Activated B cell treated with CpG ODN at 0.5 μM for 24 hours (primary cell): ENCODE measurements at regions of chr7 and their contacts with region 1.

Region 1: DNA sequence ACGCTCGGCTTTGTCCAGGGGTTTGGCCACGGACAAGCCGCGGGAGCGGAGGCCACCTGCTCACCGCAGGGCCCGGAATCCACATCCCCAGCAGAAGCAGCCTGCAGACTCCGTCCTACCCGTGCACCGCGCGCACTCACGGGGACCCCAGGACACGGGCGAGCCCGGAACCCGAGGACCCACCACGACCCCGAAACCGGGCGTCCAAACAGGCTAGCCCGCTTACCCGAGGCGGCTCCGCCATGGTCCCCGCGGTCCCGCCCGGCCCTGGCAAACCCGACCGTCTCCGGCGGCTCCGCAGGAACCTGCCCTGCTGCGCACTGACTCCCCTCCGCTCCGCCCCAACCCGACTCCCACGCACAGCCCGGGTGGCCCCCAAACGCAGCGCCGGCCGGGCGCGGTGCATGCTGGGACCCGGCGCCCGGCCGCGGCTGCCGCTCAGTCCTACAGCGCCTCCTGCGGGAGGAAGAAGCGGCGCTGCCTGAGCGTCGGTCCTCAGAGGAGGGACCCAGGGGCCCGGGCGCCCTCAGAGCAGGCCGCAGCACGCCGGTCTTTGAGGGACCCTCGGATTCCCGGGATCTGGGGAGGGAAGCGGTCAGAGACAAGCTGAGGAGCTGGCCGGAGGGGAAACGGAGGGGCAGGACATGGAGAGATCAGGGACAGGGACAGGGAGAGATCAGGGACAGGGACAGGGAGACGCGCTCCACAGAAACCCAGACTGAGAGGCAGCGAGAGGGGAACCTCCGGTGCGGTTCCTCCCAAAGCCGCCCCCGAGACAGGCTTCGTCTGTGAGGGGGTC is at the start of gene ZNF786:
- DNase-seq: peak; percentile 90
- ATAC-seq: peak; percentile 84
- H3K4me3 Mint-ChIP-seq: peak within 1 kb of the TSS; percentile 100
- H3K27ac Mint-ChIP-seq: peak within 1 kb of the TSS; percentile 100
- H3K4me1 Mint-ChIP-seq: peaks cover 32% of the 10 kb centered on the region
- H3K27me3 Mint-ChIP-seq: no peaks in the 10 kb centered on the region
- CTCF ChIP-seq: no peak
- total RNA-seq, gene ZNF786: 9.2 and 11.0 TPM in 2 replicates

Region 2: GRCh38 chr7:148856891-148857290 is 233.7 kb before region 1 on chr7:
- CTCF ChIA-PET with region 1: no interaction called
- POLR2A ChIA-PET with region 1: no interaction called
- intact Hi-C with region 1: loop called (anchors 5 kb)
- DNase-seq: no peak
- ATAC-seq: no peak
- H3K4me3 Mint-ChIP-seq: no peak overlapping the region
- H3K27ac Mint-ChIP-seq: no peak overlapping the region
- H3K4me1 Mint-ChIP-seq: peaks cover 11% of the 10 kb centered on the region
- H3K27me3 Mint-ChIP-seq: no peaks in the 10 kb centered on the region
- CTCF ChIP-seq: no peak

Region 3: GRCh38 chr7:148962823-148963582 is 127.6 kb before region 1 on chr7:
- CTCF ChIA-PET with region 1: no interaction called
- POLR2A ChIA-PET with region 1: no interaction called
- intact Hi-C with region 1: loop called (anchors 1 kb)
- DNase-seq: no peak
- ATAC-seq: peak; percentile 53
- H3K4me3 Mint-ChIP-seq: peak overlapping the region; percentile 93
- H3K27ac Mint-ChIP-seq: peak overlapping the region; percentile 87
- H3K4me1 Mint-ChIP-seq: peaks cover 29% of the 10 kb centered on the region
- H3K27me3 Mint-ChIP-seq: no peaks in the 10 kb centered on the region
- CTCF ChIP-seq: no peak

Region 4: GRCh38 chr7:149028346-149029109 is 62.1 kb before region 1 on chr7 and contains the start of gene PDIA4:
- CTCF ChIA-PET with region 1: no interaction called
- POLR2A ChIA-PET with region 1: interaction called, 5 read pairs
- intact Hi-C with region 1: loop called (anchors 1 kb)
- DNase-seq: peak; percentile 99
- ATAC-seq: peak; percentile 87
- H3K4me3 Mint-ChIP-seq: peak within 1 kb of the TSS; percentile 92
- H3K27ac Mint-ChIP-seq: peak within 1 kb of the TSS; percentile 89
- H3K4me1 Mint-ChIP-seq: peaks cover 39% of the 10 kb centered on the region
- H3K27me3 Mint-ChIP-seq: no peaks in the 10 kb centered on the region
- CTCF ChIP-seq: no peak
- total RNA-seq, gene PDIA4: 57.4 and 59.4 TPM in 2 replicates

Region 5: DNA sequence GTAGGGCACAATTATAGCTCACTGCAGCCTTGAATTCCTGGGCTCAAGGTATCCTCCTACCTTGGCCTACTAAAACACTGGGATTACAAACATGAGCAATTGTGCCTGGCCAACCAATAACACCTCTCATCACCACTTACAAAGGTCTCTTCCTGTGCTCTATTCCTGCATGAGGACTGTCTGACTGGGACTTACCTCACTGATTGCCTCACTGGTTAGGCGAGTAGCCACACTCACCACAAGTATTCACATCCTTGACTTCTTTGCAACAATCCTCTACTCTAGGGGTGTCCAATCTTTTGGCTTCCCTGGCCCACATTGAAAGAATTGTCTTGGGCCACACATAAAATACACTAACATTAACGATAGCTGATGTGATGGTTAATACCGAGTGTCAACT is 39.7 kb before region 1 on chr7:
- CTCF ChIA-PET with region 1: no interaction called
- POLR2A ChIA-PET with region 1: no interaction called
- intact Hi-C with region 1: no loop called
- DNase-seq: no peak
- ATAC-seq: no peak
- H3K4me3 Mint-ChIP-seq: no peak overlapping the region
- H3K27ac Mint-ChIP-seq: no peak overlapping the region
- H3K4me1 Mint-ChIP-seq: no peaks in the 10 kb centered on the region
- H3K27me3 Mint-ChIP-seq: no peaks in the 10 kb centered on the region
- CTCF ChIP-seq: no peak

Region 6: DNA sequence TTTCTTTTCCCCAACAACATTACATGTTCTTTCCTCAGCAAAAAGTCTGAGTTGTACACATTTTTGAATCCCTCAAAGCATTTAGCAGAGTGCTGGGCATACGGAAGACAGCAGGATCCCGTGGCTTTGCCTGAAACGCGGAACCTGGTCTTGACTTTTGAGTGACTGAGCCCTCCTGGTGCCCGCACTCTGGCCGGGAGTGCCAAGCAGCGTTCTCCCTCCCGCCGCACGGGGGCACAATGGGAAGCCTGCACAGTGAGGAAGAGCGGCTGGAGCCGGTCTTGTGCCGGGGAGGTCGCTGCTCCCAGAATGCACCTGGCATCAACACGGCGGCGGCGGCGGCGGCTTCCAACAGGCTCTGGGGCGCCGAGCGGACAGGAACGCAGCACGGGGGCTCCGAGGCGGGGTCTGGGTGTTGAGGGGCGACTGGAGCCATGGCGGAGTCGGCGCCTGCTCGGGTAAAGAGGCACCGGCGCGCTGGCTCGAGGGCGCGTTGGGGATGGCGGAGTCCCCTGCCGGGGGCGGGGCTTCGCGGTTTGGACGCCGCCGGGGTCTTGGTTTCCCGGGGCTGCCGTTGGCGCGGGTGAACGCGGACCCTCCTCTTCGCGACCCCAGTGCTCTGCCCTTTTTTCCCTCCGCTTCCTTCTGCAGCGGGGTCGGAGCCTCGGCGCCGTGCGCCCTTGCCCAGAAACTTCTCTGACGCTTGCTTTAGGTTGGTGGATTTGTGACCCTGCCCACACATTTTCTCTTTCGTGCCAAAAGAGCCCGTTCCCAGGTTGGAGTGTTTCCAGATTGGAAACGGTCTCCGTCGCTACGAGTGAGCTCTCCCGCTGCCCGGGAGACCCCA is 149.0 kb after region 1 on chr7 and contains the start of gene ZNF212:
- CTCF ChIA-PET with region 1: no interaction called
- POLR2A ChIA-PET with region 1: no interaction called
- intact Hi-C with region 1: loop called (anchors 1 kb)
- DNase-seq: peak; percentile 82
- ATAC-seq: peak; percentile 99
- H3K4me3 Mint-ChIP-seq: peak within 1 kb of the TSS; percentile 91
- H3K27ac Mint-ChIP-seq: peak within 1 kb of the TSS; percentile 76
- H3K4me1 Mint-ChIP-seq: peaks cover 37% of the 10 kb centered on the region
- H3K27me3 Mint-ChIP-seq: no peaks in the 10 kb centered on the region
- CTCF ChIP-seq: no peak
- total RNA-seq, gene ZNF212: 17.0 and 21.0 TPM in 2 replicates

Region 7: DNA sequence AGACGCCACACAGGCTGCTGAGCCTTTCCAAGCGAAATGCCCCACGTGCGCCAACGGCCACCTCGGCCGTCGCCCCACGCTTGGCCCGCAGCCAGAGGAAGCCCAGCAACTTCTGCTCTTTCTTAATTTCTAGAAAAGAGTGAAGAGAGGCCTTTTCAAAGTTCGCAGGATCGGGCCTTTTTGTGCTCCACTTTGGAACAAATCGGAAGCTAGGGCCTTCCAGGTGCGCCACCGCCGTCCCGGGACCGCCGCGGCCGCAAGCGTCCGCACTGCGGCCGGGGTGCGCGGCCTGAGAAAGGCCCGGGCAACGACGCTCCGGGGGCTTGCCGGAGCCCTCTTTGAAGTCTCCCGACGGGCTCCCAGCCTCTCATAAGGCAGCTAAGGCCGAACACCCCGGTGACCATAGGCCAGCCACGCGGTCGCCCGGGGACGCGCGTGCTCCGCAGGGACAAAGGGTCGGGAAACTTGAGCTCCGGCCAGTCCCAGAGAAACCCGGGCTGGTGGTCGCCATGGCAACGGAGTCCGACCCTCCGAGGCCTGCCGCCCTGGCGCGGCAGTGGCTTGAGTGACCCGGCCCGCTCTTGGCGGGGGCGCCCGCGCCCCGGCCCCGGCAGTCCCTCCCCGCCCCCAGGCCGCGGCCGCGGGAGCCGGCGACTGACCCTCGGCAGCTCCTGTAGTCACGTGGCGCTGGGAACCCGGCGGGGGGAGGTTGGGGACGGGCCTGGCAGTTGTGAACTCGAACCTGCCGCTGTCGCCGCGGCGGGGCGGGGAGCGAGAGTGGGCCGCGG is 1277.7 kb after region 1 on chr7 and contains the start of gene REPIN1:
- CTCF ChIA-PET with region 1: no interaction called
- POLR2A ChIA-PET with region 1: no interaction called
- intact Hi-C with region 1: loop called (anchors 2 kb)
- DNase-seq: peak; percentile 85
- ATAC-seq: peak; percentile 43
- H3K4me3 Mint-ChIP-seq: peak within 1 kb of the TSS; percentile 95
- H3K27ac Mint-ChIP-seq: peak within 1 kb of the TSS; percentile 95
- H3K4me1 Mint-ChIP-seq: peaks cover 72% of the 10 kb centered on the region
- H3K27me3 Mint-ChIP-seq: no peaks in the 10 kb centered on the region
- CTCF ChIP-seq: no peak
- total RNA-seq, gene REPIN1: 106 and 116 TPM in 2 replicates